Cardiac septum (tissue), 1 donor: ENCODE measurements at regions of chr7 and their contacts with region 1.

Region 1: DNA sequence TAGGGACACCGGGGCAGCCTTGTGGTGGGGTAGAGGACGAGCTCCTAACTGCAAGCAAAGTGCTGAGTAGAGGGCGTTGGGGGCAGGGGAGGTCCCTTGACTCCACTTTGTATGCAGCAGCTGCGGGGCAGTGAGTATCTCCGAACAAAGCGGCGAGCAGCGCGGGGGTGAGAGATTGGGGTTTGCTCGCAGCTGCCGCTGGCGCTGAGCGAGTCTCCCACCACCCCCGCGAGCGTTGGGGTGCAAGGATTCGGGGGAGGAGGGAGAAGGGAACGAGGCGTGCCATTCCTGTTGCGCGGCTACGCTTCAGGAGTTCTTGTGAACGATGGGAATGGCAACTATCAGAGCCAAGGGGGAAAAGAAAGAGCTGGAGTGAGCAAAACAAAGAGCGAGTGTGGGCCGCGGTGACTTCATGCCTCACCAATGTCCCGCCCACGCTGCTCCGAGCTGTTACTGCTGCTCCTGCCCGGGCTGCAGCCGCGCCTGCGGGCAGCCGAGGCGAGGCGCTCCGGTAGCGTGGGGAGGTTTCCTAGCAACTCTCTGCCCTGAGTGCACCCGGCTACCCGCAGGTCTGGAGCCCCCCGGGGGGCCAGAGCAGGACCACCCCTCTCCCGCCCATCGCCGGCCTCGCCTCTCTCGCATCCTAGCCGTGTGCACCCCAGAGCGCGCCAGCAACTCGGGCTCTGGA is at the start of gene ITGB8:
- DNase-seq: peak; percentile 88
- total RNA-seq, gene ITGB8: 1.5 TPM

Region 2: GRCh38 chr7:19772841-19773760 is 557.3 kb before region 1 on chr7 and contains the start of gene TMEM196:
- intact Hi-C with region 1: no loop called
- DNase-seq: no peak
- total RNA-seq, gene TMEM196: not detected

Region 3: GRCh38 chr7:20407585-20408461 is 77.4 kb after region 1 on chr7:
- intact Hi-C with region 1: loop called (anchors 5 kb)
- DNase-seq: no peak

Region 4: DNA sequence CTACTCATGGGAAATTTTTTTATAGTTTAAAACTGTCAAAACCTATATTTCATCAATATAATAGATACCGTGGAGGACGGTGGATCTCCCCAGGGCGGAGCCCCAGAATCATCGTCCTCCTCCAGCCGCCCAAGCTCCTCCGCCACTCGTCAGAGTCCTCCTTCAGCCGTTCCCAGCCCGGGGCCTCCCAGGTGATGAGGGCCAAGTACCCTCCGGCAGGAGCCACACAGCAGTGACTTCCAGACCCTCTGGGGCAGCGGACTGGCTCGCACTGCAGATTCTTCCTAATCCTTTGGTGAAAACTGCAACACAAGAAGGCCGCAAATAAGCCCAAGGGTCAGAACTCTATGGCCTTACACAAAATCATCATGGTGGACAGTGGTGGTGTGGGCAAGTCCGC is 258.3 kb after region 1 on chr7:
- intact Hi-C with region 1: loop called (anchors 10 kb)
- DNase-seq: no peak